ENCODE measurements at regions of chr3 and their contacts with region 1.

Region 1: DNA sequence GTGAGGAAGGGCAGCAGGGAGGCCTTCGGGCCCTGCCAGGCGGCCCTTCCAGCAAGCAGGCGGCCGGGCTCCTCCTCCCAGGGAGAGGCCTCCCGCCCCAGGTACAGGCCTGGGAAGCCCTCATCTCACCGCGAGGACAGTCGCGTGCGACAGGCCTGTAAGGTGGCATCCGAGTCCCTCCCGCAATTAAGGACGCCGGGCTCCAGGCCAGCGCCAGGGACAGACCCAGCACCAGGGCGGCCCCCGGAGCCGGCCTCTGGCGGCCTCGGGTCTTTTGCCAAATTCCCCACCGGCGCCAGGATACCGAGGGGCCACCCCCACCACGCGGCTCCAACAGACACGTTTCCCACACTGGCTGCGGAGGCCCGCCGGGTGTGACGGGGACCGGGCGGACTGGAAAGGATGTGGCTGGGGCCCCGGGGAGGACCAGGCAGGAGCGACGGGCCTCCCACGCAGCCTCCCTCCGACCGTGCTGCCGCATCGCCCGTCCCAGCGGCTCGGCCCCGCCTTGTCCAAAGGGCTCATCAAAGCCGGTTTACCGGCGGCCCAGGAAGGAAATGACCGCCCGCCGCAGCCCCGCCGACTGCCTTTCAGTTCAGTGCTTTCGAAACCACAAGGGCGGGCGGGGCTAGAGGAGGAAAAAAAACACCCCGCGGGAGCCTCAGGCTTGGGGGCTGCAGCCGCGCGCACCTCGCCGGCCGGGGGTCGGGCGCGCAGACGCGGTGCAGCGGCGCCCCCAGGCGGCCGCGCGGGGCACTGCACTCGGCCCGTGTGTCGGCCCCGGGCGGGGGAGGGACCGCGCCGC is 11.3 kb downstream of the XXYLT1 start:
- DNase-seq: peak; percentile 94
- ATAC-seq: peak; percentile 95
- H3K4me3 ChIP-seq: peak overlapping the region; percentile 76
- H3K27ac ChIP-seq: peak overlapping the region; percentile 91
- H3K4me1 ChIP-seq: peaks cover 26% of the 10 kb centered on the region
- H3K27me3 ChIP-seq: no peaks in the 10 kb centered on the region
- CTCF ChIP-seq: peak; percentile 45

Region 2: DNA sequence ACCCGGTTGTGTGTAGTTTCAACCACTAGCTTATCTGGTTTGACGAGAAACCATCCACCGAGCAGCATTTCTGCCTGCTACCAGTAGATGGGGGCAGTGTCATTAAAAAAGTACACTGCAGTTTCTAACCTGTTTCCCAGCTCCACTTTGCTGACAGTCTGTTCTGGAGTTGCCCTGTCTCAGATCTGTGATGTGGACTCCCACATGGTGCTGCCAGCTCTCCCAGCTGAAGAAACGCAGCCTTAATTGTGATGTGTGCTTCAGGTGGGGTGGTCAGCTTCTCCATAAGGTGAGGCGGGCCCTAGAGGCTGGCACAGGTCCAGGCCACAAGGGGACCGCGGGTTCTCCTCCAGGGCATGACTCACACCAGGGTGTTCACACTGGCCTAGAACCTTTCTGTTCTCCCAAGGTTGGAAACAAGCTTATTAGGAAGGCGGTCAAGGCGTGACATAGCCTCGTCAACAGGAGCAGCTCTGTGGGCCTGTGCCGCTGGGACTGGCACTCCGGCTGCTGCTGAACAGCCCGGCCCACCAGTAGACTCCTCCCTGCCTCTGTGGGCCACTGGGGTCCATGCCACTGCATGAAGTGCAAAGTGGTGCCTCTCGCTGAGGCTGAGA is 576.9 kb before region 1 on chr3:
- intact Hi-C with region 1: loop called (anchors 5 kb)
- DNase-seq: peak; percentile 76
- ATAC-seq: peak; percentile 84
- H3K4me3 ChIP-seq: no peak overlapping the region
- H3K27ac ChIP-seq: no peak overlapping the region
- H3K4me1 ChIP-seq: peaks cover 26% of the 10 kb centered on the region
- H3K27me3 ChIP-seq: no peaks in the 10 kb centered on the region
- CTCF ChIP-seq: peak; percentile 87

Region 3: DNA sequence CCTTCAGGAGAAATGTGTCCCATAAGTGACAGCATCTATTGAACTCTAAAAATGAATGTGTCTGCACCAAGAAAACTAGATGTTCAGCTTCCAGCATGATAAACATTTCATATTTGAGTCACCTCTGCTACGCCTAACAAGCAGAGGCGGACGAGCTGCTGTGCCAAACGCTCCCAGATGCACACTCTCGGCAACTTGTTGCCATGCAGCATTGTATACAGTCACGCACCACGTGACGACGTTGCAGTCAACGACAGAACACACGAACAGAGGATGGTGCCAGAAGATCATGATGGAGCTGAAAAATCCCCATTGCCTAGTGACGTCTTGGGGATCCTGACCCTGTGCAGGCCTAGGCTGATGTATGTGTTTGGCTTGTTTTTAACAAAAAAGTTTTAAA is 126.2 kb before region 1 on chr3:
- intact Hi-C with region 1: loop called (anchors 10 kb)
- DNase-seq: no peak
- ATAC-seq: no peak
- H3K4me3 ChIP-seq: no peak overlapping the region
- H3K27ac ChIP-seq: no peak overlapping the region
- H3K4me1 ChIP-seq: no peaks in the 10 kb centered on the region
- H3K27me3 ChIP-seq: no peaks in the 10 kb centered on the region
- CTCF ChIP-seq: no peak

Region 4: GRCh38 chr3:195442573-195443390 is 183.1 kb after region 1 on chr3 and contains the start of gene ACAP2:
- intact Hi-C with region 1: no loop called
- DNase-seq: peak; percentile 100
- ATAC-seq: peak; percentile 98
- H3K4me3 ChIP-seq: peak within 1 kb of the TSS; percentile 99
- H3K27ac ChIP-seq: peak within 1 kb of the TSS; percentile 91
- H3K4me1 ChIP-seq: peaks cover 28% of the 10 kb centered on the region
- H3K27me3 ChIP-seq: no peaks in the 10 kb centered on the region
- CTCF ChIP-seq: no peak
- total RNA-seq, gene ACAP2: 60.3 TPM

Region 5: DNA sequence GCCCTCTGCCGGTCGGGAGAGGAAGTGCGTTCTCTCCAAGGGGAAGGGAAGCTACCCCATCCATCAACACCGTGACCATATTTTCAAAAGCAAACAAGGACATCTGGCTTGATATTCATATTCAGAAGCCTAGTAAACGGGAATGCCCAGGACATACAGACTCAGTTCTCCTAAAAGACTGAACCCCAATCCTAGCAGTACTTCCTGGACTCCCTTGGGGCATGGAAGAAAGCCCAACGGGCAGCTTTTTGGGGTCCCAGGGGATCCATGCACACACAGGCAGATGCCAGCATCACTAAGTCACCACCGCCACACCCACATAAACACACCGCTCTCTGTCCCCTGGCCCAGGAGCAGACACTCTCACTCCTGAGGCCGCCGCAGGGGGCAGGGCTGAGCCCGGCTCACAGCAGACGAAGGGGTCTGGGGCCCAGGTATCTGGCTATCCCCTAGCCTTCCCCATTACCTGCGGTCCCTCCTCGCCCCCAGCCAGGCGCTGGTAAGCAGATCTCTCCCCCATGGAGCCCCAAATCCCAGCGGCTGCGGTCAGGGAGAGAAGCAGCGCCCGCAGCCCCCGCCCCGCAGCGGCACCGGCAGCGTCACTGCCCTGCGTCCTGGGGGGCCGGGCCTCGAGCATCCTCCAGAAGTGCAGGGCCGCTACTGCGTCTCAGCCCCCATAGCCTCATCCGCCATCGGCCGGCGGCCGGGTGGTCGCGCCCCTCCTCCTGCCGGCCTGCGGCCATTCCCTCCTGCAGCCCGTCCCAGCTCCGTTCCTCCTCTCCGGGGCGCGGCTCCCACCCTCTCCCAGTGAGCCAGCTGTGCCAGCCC is 635.3 kb after region 1 on chr3:
- intact Hi-C with region 1: no loop called
- DNase-seq: peak; percentile 75
- ATAC-seq: peak; percentile 31
- H3K4me3 ChIP-seq: peak overlapping the region; percentile 73
- H3K27ac ChIP-seq: peak overlapping the region; percentile 85
- H3K4me1 ChIP-seq: peaks cover 49% of the 10 kb centered on the region
- H3K27me3 ChIP-seq: no peaks in the 10 kb centered on the region
- CTCF ChIP-seq: peak; percentile 95

Measured in upper lobe of right lung (tissue), 1 donor.